Activated CD8-positive, alpha-beta T cell treated with anti-CD3 and anti-CD28 coated beads, Interleukin-2, amount 10 ng/mL, durations not matched to agents 7 days and 5 days (primary cell): ENCODE measurements at regions of chr12 and their contacts with region 1.

Region 1: DNA sequence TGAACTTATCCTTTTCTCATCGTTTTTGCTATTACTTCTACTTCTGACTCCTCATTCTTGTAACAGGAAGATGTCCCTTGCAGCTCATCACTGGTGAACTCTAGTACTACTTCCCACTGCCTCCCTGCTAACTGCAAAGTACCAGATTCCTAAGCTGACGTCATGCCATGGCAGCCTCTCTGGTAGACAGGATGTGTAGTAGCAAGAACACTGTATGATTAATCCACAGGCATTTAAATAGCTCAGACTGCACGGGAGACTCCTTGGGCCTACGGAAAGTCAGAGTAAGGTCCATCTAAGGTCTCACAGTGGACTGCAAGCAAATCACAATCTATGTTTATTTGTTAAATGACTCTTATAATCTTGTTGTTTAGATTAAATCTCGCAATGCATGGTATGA is 43.5 kb downstream of the DNAI7 start:
- DNase-seq: no peak
- ATAC-seq: no peak
- H3K4me3 Mint-ChIP-seq: no peak overlapping the region
- H3K27ac Mint-ChIP-seq: no peak overlapping the region
- H3K4me1 Mint-ChIP-seq: peaks cover 6% of the 10 kb centered on the region
- H3K27me3 Mint-ChIP-seq: no peaks in the 10 kb centered on the region

Region 2: GRCh38 chr12:24991209-24992049 is 160.0 kb before region 1 on chr12:
- CTCF ChIA-PET with region 1: interaction called, 32 read pairs
- POLR2A ChIA-PET with region 1: no interaction called
- DNase-seq: peak; percentile 35
- ATAC-seq: peak; percentile 78
- H3K4me3 Mint-ChIP-seq: no peak overlapping the region
- H3K27ac Mint-ChIP-seq: no peak overlapping the region
- H3K4me1 Mint-ChIP-seq: no peaks in the 10 kb centered on the region
- H3K27me3 Mint-ChIP-seq: peaks cover 8% of the 10 kb centered on the region

Region 3: DNA sequence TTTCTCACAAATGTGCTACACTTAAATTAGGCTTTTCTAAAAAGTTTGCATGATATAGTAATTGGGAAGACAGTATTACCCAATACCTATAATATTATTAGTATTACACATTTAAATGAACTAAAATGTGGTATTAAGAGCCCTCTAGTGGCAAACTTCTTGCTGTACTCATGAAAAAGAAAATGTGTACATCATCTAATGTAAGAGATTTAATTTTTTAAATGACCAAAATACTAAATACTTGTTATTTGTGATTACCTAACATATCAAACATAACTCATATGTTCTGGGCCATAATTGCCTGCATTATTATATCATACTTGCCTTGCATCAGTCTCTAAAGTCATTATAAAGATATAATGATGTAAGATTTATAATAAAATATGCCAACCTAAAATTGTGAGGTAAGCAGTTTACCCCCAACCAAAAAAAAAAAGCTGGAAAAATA is 20.7 kb before region 1 on chr12:
- CTCF ChIA-PET with region 1: interaction called, 13 read pairs
- POLR2A ChIA-PET with region 1: no interaction called
- DNase-seq: no peak
- ATAC-seq: no peak
- H3K4me3 Mint-ChIP-seq: no peak overlapping the region
- H3K27ac Mint-ChIP-seq: no peak overlapping the region
- H3K4me1 Mint-ChIP-seq: no peaks in the 10 kb centered on the region
- H3K27me3 Mint-ChIP-seq: no peaks in the 10 kb centered on the region

Region 4: GRCh38 chr12:25184132-25184531 is 32.7 kb after region 1 on chr12:
- CTCF ChIA-PET with region 1: interaction called, 11 read pairs
- POLR2A ChIA-PET with region 1: no interaction called
- DNase-seq: no peak
- ATAC-seq: no peak
- H3K4me3 Mint-ChIP-seq: no peak overlapping the region
- H3K27ac Mint-ChIP-seq: no peak overlapping the region
- H3K4me1 Mint-ChIP-seq: peaks cover 17% of the 10 kb centered on the region
- H3K27me3 Mint-ChIP-seq: no peaks in the 10 kb centered on the region

Region 5: DNA sequence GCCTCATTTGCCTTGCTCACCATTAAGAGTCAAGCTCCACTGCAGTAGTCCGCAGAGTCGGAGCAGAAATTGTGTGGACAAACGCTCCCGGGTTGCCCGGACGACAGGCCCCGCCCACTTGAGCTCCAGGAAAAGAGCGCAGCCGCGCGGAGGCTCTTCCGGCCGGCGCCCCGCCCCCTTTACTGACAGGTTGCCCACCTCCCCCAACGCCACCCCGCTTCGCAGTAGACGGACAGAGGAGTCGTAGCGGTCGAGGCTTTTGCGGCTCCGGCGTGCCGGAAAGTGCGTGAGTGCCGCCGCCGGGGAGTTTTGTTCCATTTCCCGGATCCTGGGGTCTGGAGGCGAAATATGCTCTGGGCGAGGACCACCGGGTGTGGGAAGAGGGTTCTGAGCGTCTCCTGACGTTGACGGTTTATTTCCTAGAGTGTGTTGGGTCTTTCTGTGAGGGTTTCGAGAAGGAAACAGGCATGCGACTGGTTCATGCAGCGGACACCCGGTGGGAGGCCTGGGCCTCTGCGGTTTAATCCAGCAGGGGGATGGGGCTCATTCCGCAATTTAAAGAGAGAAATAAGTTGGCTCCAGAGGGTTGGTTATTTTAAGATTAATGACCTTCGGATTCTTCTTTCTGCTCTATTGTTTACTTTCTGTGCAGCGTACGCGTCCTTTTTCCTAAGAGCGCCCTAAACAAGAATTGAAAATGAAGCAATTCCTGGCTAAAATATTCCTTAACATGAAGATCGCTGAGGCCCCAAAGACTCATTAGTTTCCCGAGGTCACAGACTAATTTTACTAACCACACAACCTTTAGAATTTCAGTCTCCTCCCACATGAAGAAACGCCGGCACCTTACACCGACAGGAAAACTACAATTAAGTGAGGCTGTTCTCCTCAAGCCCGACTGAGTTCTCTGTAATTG is 43.8 kb after region 1 on chr12 and contains the starts of genes DNAI7 and ETFRF1:
- CTCF ChIA-PET with region 1: interaction called, 12 read pairs
- POLR2A ChIA-PET with region 1: no interaction called
- DNase-seq: peak; percentile 98
- ATAC-seq: peak; percentile 95
- H3K4me3 Mint-ChIP-seq: peak within 1 kb of the TSS; percentile 93
- H3K27ac Mint-ChIP-seq: peak within 1 kb of the TSS; percentile 88
- H3K4me1 Mint-ChIP-seq: peaks cover 19% of the 10 kb centered on the region
- H3K27me3 Mint-ChIP-seq: no peaks in the 10 kb centered on the region
- total RNA-seq, gene DNAI7: 0.16 TPM in 1 of 2 experiments, not detected in the other
- total RNA-seq, gene ETFRF1: 8.9 to 9.7 TPM

Region 6: GRCh38 chr12:25250744-25251730 is 99.6 kb after region 1 on chr12 and contains the start of gene KRAS:
- CTCF ChIA-PET with region 1: no interaction called
- POLR2A ChIA-PET with region 1: no interaction called
- DNase-seq: peak; percentile 94
- ATAC-seq: peak; percentile 87
- H3K4me3 Mint-ChIP-seq: peak within 1 kb of the TSS; percentile 88
- H3K27ac Mint-ChIP-seq: peak within 1 kb of the TSS; percentile 92
- H3K4me1 Mint-ChIP-seq: peaks cover 23% of the 10 kb centered on the region
- H3K27me3 Mint-ChIP-seq: peaks cover 2% of the 10 kb centered on the region
- total RNA-seq, gene KRAS: 33.4 to 37.6 TPM